Activated CD8-positive, alpha-beta T cell treated with anti-CD3 and anti-CD28 coated beads for 36 hours (primary cell): ENCODE measurements at regions of chr12 and their contacts with region 1.

Region 1: DNA sequence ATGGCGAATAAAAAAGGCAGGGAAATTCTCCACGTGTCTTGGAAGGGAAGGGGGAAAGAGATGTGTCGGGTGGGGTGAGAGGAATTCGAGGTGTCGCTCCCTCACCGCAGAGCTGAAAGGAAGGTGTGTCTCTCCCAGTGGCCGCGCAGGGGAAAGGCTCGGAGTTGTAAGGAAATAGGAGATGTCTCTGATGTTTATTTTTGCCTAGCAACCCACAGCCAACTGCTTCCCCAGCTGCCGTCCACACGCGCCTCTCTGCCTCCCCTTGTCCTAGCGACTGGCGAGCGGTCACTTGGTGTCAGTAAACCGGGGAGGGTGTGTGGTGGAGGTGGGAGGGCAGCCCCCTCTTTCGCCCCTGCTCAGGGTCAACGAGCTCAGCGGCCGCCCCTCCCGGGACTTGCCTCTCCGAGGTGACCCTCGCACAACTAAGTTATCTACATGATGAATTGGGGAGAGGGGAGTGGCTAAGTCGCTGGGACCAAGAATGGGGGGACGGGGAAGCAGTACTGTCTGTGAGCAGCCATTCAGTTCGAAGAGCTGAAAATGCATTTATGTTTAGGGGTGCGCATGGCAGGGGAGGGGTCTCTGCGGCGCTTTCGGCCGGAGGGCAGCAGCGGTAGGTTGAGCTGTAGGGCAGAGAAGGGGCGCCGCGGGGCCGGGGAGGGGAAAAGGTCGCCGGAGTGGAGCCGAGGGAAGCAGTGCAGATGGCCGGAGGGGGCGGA is 585 bp upstream of the DYRK2 start:
- DNase-seq: peak; percentile 56
- ATAC-seq: peak; percentile 17
- H3K4me3 Mint-ChIP-seq: peak overlapping the region; percentile 82
- H3K27ac Mint-ChIP-seq: peak overlapping the region; percentile 88
- H3K4me1 Mint-ChIP-seq: peaks cover 23% of the 10 kb centered on the region
- H3K27me3 Mint-ChIP-seq: no peaks in the 10 kb centered on the region
- CTCF ChIP-seq: no peak

Region 2: DNA sequence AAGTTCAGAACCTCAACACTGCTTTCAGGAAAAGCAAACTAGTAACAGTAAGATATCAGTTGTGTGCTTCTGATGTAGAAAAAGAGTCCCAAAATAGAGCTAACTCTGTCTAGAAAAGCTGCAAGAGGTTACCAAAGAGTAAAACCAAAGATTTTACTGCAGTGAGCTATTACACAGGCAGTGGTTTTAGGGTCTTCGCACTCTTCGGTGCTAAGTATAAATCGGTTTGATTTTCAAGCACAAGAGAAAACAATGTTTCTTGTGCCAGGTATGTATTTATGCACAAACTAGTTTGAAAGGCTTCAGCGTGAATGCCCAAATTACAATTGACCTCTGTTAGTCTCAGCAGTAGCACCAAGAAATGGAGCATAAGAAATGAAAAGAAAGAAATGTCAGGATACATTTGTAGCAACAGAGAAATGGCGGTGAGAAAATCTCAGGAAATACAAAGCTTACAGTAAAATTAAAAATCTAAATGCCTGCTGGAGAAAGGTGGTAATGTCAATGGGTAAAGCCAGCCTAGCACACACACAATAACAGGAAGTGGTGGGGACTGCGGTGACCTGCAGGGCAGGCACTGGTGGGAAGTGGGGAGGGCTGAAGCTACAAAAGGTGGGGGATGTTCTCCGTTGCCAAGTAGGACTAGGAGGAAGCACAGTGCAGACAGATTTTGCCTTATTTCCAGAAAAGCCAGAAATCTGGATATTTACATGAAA is 17.4 kb before region 1 on chr12:
- CTCF ChIA-PET with region 1: interaction called, 4 read pairs
- POLR2A ChIA-PET with region 1: interaction called, 5 read pairs
- intact Hi-C with region 1: loop called (anchors 2 kb)
- DNase-seq: peak; percentile 92
- ATAC-seq: peak; percentile 96
- H3K4me3 Mint-ChIP-seq: peak overlapping the region; percentile 47
- H3K27ac Mint-ChIP-seq: peak overlapping the region; percentile 88
- H3K4me1 Mint-ChIP-seq: peaks cover 79% of the 10 kb centered on the region
- H3K27me3 Mint-ChIP-seq: no peaks in the 10 kb centered on the region
- CTCF ChIP-seq: peak; percentile 60

Region 3: DNA sequence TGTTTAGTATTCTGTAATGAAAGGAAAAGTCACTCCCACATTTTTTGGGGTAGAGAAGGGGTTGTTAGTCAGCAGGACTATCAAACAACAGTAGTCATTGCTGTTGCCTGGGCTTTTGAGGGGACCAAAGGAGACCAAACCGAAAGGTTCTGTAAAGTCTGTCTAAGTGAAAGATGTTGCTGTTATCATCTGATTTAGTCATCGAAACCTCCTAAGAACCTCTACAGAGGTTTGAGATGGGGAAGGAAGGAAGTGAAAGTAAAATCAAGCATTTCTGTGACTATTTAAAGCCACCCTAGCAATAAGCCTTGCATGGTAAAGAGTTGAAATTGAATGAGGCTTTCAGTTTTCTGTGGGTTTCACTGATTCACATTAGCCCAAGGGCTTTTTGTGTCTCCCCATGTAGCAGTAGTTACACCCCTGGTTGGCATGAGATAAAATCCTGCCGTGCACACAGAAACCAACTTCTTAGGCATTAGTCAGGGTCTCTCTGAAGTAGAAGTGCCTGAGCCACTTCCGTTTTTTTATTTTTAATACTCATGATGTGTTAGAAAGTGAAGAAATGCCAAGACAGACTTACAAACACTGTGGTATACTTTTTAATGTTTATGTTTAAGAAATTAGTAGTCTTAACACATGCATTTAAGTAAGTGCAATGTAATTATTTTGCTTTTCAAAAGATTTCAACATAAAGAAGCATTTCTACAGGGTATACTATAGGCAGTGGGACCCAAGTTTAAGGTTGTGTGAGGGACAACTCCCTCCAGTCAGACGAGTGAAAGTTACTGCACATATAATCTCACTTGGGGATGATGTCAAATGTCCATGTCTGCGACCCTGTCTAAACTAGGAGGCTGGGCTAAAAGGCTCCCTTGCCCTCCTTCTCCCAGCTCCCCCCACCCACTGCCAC is 51.0 kb after region 1 on chr12:
- CTCF ChIA-PET with region 1: no interaction called
- POLR2A ChIA-PET with region 1: no interaction called
- intact Hi-C with region 1: loop called (anchors 5 kb)
- DNase-seq: peak; percentile 79
- ATAC-seq: peak; percentile 89
- H3K4me3 Mint-ChIP-seq: peak overlapping the region; percentile 61
- H3K27ac Mint-ChIP-seq: peak overlapping the region; percentile 79
- H3K4me1 Mint-ChIP-seq: peaks cover 70% of the 10 kb centered on the region
- H3K27me3 Mint-ChIP-seq: no peaks in the 10 kb centered on the region
- CTCF ChIP-seq: no peak

Region 4: GRCh38 chr12:67943226-67943892 is 295.4 kb after region 1 on chr12:
- CTCF ChIA-PET with region 1: interaction called, 3 read pairs
- POLR2A ChIA-PET with region 1: no interaction called
- intact Hi-C with region 1: loop called (anchors 10 kb)
- DNase-seq: peak; percentile 86
- ATAC-seq: peak; percentile 77
- H3K4me3 Mint-ChIP-seq: no peak overlapping the region
- H3K27ac Mint-ChIP-seq: no peak overlapping the region
- H3K4me1 Mint-ChIP-seq: no peaks in the 10 kb centered on the region
- H3K27me3 Mint-ChIP-seq: no peaks in the 10 kb centered on the region
- CTCF ChIP-seq: peak; percentile 84